ENCODE measurements at regions of chr3 and their contacts with region 1.

Region 1: GRCh38 chr3:31185062-31185357 is 290.5 kb upstream of the GADL1 start:
- DNase-seq: no peak
- H3K4me3 ChIP-seq: no peak overlapping the region
- H3K27ac ChIP-seq: no peak overlapping the region
- H3K4me1 ChIP-seq: peaks cover 0 to 21% of the 10 kb centered on the region in 2 donors
- H3K27me3 ChIP-seq: no peaks in the 10 kb centered on the region
- CTCF ChIP-seq: no peak

Region 2: GRCh38 chr3:31166249-31166885 is 18.6 kb before region 1 on chr3:
- intact Hi-C with region 1: loop called (anchors 2 kb)
- DNase-seq: peak in 1 of 2 donors; percentile 79
- H3K4me3 ChIP-seq: peak overlapping the region in 1 of 2 donors; percentile 43
- H3K27ac ChIP-seq: peak overlapping the region; percentile 53 to 66
- H3K4me1 ChIP-seq: peaks cover 2 to 23% of the 10 kb centered on the region in 2 donors
- H3K27me3 ChIP-seq: no peaks in the 10 kb centered on the region
- CTCF ChIP-seq: no peak

Region 3: DNA sequence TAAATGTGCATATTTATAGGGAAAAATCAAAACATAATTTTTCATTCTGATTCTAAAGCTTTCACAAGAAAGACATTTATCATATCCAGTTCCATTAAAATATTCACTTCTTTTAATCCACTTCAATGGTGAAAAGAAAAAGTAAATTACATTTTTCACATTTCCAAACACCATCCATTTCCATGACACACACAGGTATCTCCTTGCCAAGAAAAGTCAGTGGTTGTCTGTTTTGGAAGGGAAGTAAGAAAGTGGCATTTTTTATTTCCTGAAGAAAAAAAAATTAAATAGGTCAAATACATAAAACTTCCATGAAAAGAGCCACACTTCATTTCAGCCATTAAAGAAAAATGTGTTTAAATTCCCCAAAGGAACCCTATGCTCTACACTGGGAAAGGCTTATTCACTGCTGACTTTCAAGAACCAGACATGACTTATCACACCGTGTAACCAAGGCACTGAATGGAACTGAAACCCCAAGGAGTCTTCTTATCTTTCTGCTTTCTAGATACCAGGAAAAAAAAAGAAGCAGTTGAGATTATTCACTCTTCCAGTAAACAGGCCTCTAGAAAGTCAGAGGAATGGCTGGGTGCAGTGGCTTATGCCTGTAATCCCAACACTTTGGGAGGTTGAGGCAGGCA is 751.5 kb after region 1 on chr3:
- intact Hi-C with region 1: no loop called
- DNase-seq: no peak
- H3K4me3 ChIP-seq: no peak overlapping the region
- H3K27ac ChIP-seq: peak overlapping the region in 1 of 2 donors; percentile 45
- H3K4me1 ChIP-seq: peaks cover 0 to 10% of the 10 kb centered on the region in 2 donors
- H3K27me3 ChIP-seq: no peaks in the 10 kb centered on the region
- CTCF ChIP-seq: no peak